CD4-positive, alpha-beta T cell (primary cell): ENCODE measurements at regions of chr2 and their contacts with region 1.

Region 1: GRCh38 chr2:191030521-191031154 is 16.7 kb upstream of the STAT1 start:
- DNase-seq: peak in 6 of 14 experiments; percentile 33 to 82 (median 65)
- ATAC-seq: peak; percentile 95
- H3K4me3 ChIP-seq: no peak overlapping the region
- H3K4me3 Mint-ChIP-seq: no peak overlapping the region
- H3K27ac ChIP-seq: no peak overlapping the region
- H3K27ac Mint-ChIP-seq: peak overlapping the region; percentile 5
- H3K4me1 ChIP-seq: peaks cover 23% of the 10 kb centered on the region
- H3K4me1 Mint-ChIP-seq: peaks cover 28% of the 10 kb centered on the region
- H3K27me3 ChIP-seq: no peaks in the 10 kb centered on the region
- H3K27me3 Mint-ChIP-seq: no peaks in the 10 kb centered on the region
- CTCF ChIP-seq: peak; percentile 85

Region 2: GRCh38 chr2:190781604-190782198 is 248.9 kb before region 1 on chr2:
- CTCF ChIA-PET with region 1: interaction called, 3 read pairs
- POLR2A ChIA-PET with region 1: no interaction called
- intact Hi-C with region 1: loop called (anchors 1 kb)
- DNase-seq: peak in 12 of 14 experiments; percentile 15 to 76 (median 29)
- ATAC-seq: peak; percentile 70
- H3K4me3 ChIP-seq: no peak overlapping the region
- H3K4me3 Mint-ChIP-seq: no peak overlapping the region
- H3K27ac ChIP-seq: no peak overlapping the region
- H3K27ac Mint-ChIP-seq: no peak overlapping the region
- H3K4me1 ChIP-seq: peaks cover 2% of the 10 kb centered on the region
- H3K4me1 Mint-ChIP-seq: no peaks in the 10 kb centered on the region
- H3K27me3 ChIP-seq: no peaks in the 10 kb centered on the region
- H3K27me3 Mint-ChIP-seq: no peaks in the 10 kb centered on the region
- CTCF ChIP-seq: peak; percentile 65

Region 3: DNA sequence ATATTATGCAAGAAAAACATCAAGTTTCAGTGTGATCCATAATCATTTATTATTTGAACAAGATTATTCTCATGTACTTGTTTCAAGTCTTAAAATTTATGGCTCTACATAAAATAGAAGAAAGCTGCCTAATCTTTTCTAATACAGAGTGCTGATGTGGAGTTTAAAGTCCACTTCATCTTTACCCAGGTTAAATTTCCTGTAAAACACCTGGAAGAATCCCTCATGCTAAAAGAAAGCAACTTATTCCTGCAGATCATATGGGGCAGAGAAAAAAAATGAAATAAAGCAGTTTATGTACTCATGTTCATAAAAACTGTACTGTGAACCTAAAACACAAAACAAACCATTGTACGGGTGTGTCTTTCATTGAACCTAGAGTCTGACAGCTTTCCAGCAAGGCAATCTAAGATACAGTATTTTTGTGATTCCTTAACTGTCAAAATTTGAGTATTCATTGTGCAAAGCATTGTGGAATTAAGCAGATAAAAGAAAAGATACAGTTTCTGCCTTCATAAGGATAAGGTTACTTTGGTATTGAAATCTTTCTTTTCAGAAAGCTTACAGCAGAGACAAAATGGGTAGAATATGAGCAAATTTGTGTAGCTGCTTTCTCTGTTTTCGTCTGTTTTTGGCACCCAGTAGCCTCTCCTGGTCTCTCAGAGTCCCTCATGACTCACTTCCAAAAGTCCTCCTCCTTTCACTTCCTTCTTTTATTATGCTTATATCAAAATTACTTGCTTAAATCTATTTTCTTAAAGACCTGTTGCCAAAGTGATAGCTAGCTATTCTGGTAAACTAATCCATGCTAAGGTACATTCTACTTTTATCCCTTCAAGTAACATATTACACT is 176.9 kb before region 1 on chr2:
- CTCF ChIA-PET with region 1: no interaction called
- POLR2A ChIA-PET with region 1: no interaction called
- intact Hi-C with region 1: loop called in 1 of 2 experiments (anchors 5 kb)
- DNase-seq: peak in 2 of 14 experiments; percentile 15
- ATAC-seq: no peak
- H3K4me3 ChIP-seq: no peak overlapping the region
- H3K4me3 Mint-ChIP-seq: no peak overlapping the region
- H3K27ac ChIP-seq: no peak overlapping the region
- H3K27ac Mint-ChIP-seq: no peak overlapping the region
- H3K4me1 ChIP-seq: peaks cover 3% of the 10 kb centered on the region
- H3K4me1 Mint-ChIP-seq: no peaks in the 10 kb centered on the region
- H3K27me3 ChIP-seq: no peaks in the 10 kb centered on the region
- H3K27me3 Mint-ChIP-seq: no peaks in the 10 kb centered on the region
- CTCF ChIP-seq: no peak

Region 4: GRCh38 chr2:190996338-190996946 is 34.2 kb before region 1 on chr2:
- CTCF ChIA-PET with region 1: interaction called, 3 read pairs
- POLR2A ChIA-PET with region 1: no interaction called
- intact Hi-C with region 1: loop called (anchors 1 to 2 kb)
- DNase-seq: peak in 8 of 14 experiments; percentile 19 to 76 (median 44)
- ATAC-seq: peak; percentile 92
- H3K4me3 ChIP-seq: no peak overlapping the region
- H3K4me3 Mint-ChIP-seq: no peak overlapping the region
- H3K27ac ChIP-seq: peak overlapping the region in 1 of 2 donors; percentile 22
- H3K27ac Mint-ChIP-seq: peak overlapping the region; percentile 50
- H3K4me1 ChIP-seq: peaks cover 18% of the 10 kb centered on the region
- H3K4me1 Mint-ChIP-seq: peaks cover 46% of the 10 kb centered on the region
- H3K27me3 ChIP-seq: no peaks in the 10 kb centered on the region
- H3K27me3 Mint-ChIP-seq: no peaks in the 10 kb centered on the region
- CTCF ChIP-seq: peak; percentile 67

Region 5: GRCh38 chr2:191013932-191014652 is 16.5 kb before region 1 on chr2 and contains the start of gene STAT1:
- CTCF ChIA-PET with region 1: interaction called, 3 read pairs
- POLR2A ChIA-PET with region 1: interaction called, 164 read pairs
- intact Hi-C with region 1: loop called in 1 of 2 experiments (anchors 1 kb)
- DNase-seq: peak; percentile 89 to 99 (median 96)
- ATAC-seq: peak; percentile 84
- H3K4me3 ChIP-seq: peak within 1 kb of the TSS; percentile 75
- H3K4me3 Mint-ChIP-seq: no peak within 1 kb of the TSS
- H3K27ac ChIP-seq: peak within 1 kb of the TSS; percentile 89 to 91
- H3K27ac Mint-ChIP-seq: no peak within 1 kb of the TSS
- H3K4me1 ChIP-seq: peaks cover 54% of the 10 kb centered on the region
- H3K4me1 Mint-ChIP-seq: peaks cover 43% of the 10 kb centered on the region
- H3K27me3 ChIP-seq: no peaks in the 10 kb centered on the region
- H3K27me3 Mint-ChIP-seq: no peaks in the 10 kb centered on the region
- CTCF ChIP-seq: no peak
- total RNA-seq, gene STAT1: 56.6 to 57.8 TPM

Region 6: GRCh38 chr2:191280304-191280703 is 249.7 kb after region 1 on chr2:
- CTCF ChIA-PET with region 1: no interaction called
- POLR2A ChIA-PET with region 1: no interaction called
- intact Hi-C with region 1: no loop called
- DNase-seq: no peak
- ATAC-seq: no peak
- H3K4me3 ChIP-seq: no peak overlapping the region
- H3K4me3 Mint-ChIP-seq: no peak overlapping the region
- H3K27ac ChIP-seq: no peak overlapping the region
- H3K27ac Mint-ChIP-seq: no peak overlapping the region
- H3K4me1 ChIP-seq: no peaks in the 10 kb centered on the region
- H3K4me1 Mint-ChIP-seq: no peaks in the 10 kb centered on the region
- H3K27me3 ChIP-seq: no peaks in the 10 kb centered on the region
- H3K27me3 Mint-ChIP-seq: peaks cover 6% of the 10 kb centered on the region
- CTCF ChIP-seq: no peak